Activated B cell treated with CpG ODN at 0.5 μM for 24 hours (primary cell): ENCODE measurements at regions of chr17 and their contacts with region 1.

Region 1: GRCh38 chr17:42653179-42654124 is 5.6 kb upstream of the TUBG2 start:
- DNase-seq: no peak
- ATAC-seq: no peak
- H3K4me3 Mint-ChIP-seq: no peak overlapping the region
- H3K27ac Mint-ChIP-seq: no peak overlapping the region
- H3K4me1 Mint-ChIP-seq: peaks cover 23% of the 10 kb centered on the region
- H3K27me3 Mint-ChIP-seq: peaks cover 19% of the 10 kb centered on the region
- CTCF ChIP-seq: no peak

Region 2: DNA sequence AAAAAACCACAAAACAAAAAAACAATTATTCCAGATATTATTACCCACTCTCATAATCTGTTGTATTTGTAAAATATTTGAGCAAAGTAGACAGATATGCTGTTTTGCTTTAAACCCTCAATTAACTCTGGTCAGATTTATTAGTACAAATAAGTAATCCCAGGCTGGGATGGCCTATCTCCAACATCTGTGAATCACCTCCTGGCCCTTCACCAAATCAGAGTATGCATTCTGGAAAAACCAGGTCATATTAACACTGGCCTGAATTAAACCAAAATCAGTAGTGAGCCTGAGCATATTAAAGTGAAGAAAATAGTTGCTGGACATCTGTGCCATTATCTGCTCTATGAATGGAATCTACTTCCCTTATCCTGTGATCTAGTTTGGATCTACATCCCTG is 306.3 kb before region 1 on chr17:
- CTCF ChIA-PET with region 1: no interaction called
- POLR2A ChIA-PET with region 1: no interaction called
- intact Hi-C with region 1: no loop called
- DNase-seq: no peak
- ATAC-seq: no peak
- H3K4me3 Mint-ChIP-seq: no peak overlapping the region
- H3K27ac Mint-ChIP-seq: no peak overlapping the region
- H3K4me1 Mint-ChIP-seq: peaks cover 32% of the 10 kb centered on the region
- H3K27me3 Mint-ChIP-seq: no peaks in the 10 kb centered on the region
- CTCF ChIP-seq: no peak

Region 3: DNA sequence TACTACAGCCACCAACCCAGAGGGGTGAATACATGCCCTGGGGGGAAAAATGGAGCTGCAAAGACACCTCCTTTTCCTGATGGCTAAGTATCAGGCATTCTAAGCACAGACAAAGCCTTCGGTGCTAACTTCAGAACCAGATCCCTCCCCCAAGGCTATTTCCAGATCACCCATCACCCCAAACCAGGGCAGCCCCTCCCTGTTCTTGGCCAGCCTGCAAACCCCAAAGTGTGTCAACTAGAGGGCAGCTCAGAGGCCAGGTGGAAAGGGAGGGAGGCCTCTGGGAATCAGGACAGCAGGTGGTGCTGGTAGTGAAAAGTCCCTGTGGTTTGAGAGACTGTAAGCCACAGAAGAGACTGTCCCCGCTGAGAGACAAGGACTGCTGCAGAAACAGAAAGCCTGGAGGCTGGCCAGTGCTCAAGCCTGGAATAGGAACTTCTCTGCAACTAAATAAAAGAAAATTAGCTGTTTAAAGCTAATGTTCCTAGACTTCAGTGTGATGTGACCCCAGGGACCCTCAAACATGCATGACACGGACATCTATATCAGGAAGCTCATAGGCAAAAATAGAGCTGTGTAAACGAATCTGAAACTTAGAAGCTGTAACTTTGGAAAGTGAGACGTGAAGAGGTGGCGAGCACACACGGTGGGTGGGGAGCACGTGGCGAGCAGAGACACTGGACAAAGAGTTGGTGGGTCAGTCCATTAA is 34.9 kb before region 1 on chr17:
- CTCF ChIA-PET with region 1: no interaction called
- POLR2A ChIA-PET with region 1: no interaction called
- intact Hi-C with region 1: loop called (anchors 5 kb)
- DNase-seq: no peak
- ATAC-seq: peak; percentile 71
- H3K4me3 Mint-ChIP-seq: peak overlapping the region; percentile 48
- H3K27ac Mint-ChIP-seq: peak overlapping the region; percentile 56
- H3K4me1 Mint-ChIP-seq: peaks cover 18% of the 10 kb centered on the region
- H3K27me3 Mint-ChIP-seq: no peaks in the 10 kb centered on the region
- CTCF ChIP-seq: no peak